MCF 10A (cell line): ENCODE measurements at regions of chr16 and their contacts with region 1.

Region 1: DNA sequence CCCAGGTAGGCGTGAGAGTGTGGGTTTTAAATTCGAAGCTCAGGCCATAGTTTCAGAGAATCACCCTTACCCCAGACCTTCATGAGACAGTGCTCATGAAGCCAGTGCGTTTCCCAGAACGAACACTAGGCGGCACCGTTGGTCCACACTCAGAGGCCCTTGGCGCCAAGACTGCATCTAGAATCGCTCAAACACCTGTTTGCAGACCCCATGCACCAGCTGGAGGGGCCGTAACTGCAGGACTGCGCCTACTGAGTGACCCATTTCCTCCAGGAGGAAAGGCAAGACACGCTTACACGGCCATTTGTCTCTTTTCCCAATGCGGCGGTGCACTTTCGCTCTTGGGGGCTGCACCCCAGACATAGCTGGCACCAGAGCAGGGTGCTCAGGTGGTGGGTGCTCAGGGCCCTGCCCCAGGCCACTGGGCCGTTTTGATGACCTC is 34.0 kb downstream of the ADGRG5 start:
- DNase-seq: peak; percentile 73
- H3K4me3 Mint-ChIP-seq: no peak overlapping the region
- H3K27ac Mint-ChIP-seq: no peak overlapping the region
- H3K4me1 Mint-ChIP-seq: no peaks in the 10 kb centered on the region
- H3K27me3 Mint-ChIP-seq: peaks cover 23% of the 10 kb centered on the region
- CTCF ChIP-seq: peak; percentile 97

Region 2: DNA sequence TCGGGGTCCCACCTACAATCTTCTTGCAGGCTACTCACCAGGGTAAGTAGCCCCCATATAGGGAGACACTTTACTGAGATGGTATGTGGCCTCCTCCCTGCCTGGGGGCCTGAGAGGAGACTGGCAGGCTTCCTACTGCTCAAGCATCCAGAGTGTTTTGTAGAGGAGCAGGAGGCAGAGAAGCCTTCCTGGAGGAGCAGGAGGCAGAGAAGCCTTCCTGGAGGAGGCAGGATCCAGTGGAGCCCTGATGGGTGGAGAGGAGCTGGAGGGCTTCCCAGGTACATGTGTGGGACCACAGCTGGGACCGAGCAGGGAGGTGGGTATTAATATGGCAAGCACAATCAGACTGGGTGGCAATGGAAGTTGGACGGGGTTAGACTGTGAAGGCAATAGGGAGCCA is 36.1 kb before region 1 on chr16:
- CTCF ChIA-PET with region 1: no interaction called
- POLR2A ChIA-PET with region 1: no interaction called
- intact Hi-C with region 1: no loop called
- DNase-seq: no peak
- H3K4me3 Mint-ChIP-seq: no peak overlapping the region
- H3K27ac Mint-ChIP-seq: no peak overlapping the region
- H3K4me1 Mint-ChIP-seq: no peaks in the 10 kb centered on the region
- H3K27me3 Mint-ChIP-seq: peaks cover 19% of the 10 kb centered on the region
- CTCF ChIP-seq: no peak

Region 3: GRCh38 chr16:57591086-57591869 is 14.8 kb after region 1 on chr16:
- CTCF ChIA-PET with region 1: interaction called, 25 read pairs
- POLR2A ChIA-PET with region 1: interaction called, 3 read pairs
- intact Hi-C with region 1: no loop called
- DNase-seq: peak; percentile 87
- H3K4me3 Mint-ChIP-seq: no peak overlapping the region
- H3K27ac Mint-ChIP-seq: peak overlapping the region; percentile 36
- H3K4me1 Mint-ChIP-seq: peaks cover 14% of the 10 kb centered on the region
- H3K27me3 Mint-ChIP-seq: no peaks in the 10 kb centered on the region
- CTCF ChIP-seq: peak; percentile 88

Region 4: DNA sequence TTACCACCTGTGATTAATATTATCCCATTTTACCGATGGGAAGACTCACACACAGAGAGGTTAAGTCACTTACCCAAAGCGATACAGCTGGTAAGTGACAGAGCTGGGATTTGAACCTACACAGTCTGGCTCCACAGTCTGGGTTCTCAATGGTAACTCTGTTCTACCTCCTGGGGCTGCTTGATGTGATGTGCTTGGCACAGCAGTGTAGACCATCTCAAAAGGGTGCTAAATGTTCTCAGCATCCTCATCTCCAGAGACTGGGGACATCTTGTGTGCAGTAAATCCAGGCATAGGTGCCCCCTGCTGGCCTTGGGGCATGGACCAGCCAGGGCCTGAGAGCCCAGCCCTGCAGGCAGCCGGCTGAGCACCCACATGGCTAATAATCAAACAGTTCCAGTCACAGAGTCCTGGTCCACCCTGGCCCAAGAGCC is 143.7 kb after region 1 on chr16:
- CTCF ChIA-PET with region 1: interaction called, 7 read pairs
- POLR2A ChIA-PET with region 1: no interaction called
- intact Hi-C with region 1: loop called (anchors 1 kb)
- DNase-seq: peak; percentile 69
- H3K4me3 Mint-ChIP-seq: no peak overlapping the region
- H3K27ac Mint-ChIP-seq: no peak overlapping the region
- H3K4me1 Mint-ChIP-seq: no peaks in the 10 kb centered on the region
- H3K27me3 Mint-ChIP-seq: peaks cover 1% of the 10 kb centered on the region
- CTCF ChIP-seq: peak; percentile 64

Region 5: GRCh38 chr16:57757326-57757786 is 180.9 kb after region 1 on chr16:
- CTCF ChIA-PET with region 1: interaction called, 11 read pairs
- POLR2A ChIA-PET with region 1: no interaction called
- intact Hi-C with region 1: loop called (anchors 1 kb)
- DNase-seq: peak; percentile 85
- H3K4me3 Mint-ChIP-seq: no peak overlapping the region
- H3K27ac Mint-ChIP-seq: no peak overlapping the region
- H3K4me1 Mint-ChIP-seq: no peaks in the 10 kb centered on the region
- H3K27me3 Mint-ChIP-seq: no peaks in the 10 kb centered on the region
- CTCF ChIP-seq: peak; percentile 87